Activated T-helper 2 cell treated with anti-CD3 and anti-CD28 coated beads, Interferon-gamma antibody, Interleukin-2, Interleukin-4, amounts not matched to agents 10 μg/mL and 5 μg/mL and 100 μg/mL, durations not matched to agents 14 hours and 24 hours and 36 hours (primary cell): ENCODE measurements at regions of chr13 and their contacts with region 1.

Region 1: DNA sequence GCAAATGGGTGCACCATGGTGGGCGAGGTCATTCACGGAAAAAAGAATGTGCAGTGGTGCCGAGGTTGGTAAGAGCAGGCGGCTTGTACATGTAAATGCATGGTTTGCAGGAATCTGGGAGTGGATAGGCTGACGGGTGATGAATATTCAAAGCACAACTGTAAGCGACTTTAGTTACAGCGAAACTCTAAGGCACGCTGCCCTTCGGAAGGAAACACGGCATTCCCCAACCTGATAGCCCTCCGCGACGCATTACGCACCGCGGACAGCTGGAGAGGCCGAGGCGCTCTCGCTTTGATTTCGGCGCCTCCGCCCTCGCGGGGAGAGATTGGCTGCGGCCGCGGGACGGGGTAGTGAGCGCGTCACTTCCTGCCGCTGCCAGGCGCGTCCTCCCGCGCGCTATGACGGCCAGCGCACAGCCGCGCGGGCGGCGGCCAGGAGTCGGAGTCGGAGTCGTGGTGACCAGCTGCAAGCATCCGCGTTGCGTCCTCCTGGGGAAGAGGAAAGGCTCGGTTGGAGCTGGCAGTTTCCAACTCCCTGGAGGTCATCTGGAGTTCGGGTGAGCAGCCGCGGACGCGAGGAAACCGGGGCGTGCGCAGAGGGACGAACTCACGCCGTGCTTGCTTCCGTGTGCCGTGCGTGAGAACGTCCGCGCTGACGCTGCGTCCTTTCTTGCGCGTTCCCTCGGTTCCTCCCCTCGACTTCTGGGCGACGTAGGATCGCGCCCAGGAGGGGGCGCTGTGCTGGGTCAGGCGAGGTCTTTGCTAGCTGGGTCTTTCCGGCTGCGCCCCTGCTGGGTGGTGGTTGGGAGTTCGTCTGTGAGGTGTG is at the start of gene NUDT15:
- DNase-seq: peak; percentile 96
- H3K4me3 Mint-ChIP-seq: peak within 1 kb of the TSS; percentile 98
- H3K27ac Mint-ChIP-seq: peak within 1 kb of the TSS; percentile 99
- H3K4me1 Mint-ChIP-seq: peaks cover 40% of the 10 kb centered on the region
- H3K27me3 Mint-ChIP-seq: no peaks in the 10 kb centered on the region
- total RNA-seq, gene NUDT15: 12.2 and 15.9 TPM in 2 replicates

Region 2: DNA sequence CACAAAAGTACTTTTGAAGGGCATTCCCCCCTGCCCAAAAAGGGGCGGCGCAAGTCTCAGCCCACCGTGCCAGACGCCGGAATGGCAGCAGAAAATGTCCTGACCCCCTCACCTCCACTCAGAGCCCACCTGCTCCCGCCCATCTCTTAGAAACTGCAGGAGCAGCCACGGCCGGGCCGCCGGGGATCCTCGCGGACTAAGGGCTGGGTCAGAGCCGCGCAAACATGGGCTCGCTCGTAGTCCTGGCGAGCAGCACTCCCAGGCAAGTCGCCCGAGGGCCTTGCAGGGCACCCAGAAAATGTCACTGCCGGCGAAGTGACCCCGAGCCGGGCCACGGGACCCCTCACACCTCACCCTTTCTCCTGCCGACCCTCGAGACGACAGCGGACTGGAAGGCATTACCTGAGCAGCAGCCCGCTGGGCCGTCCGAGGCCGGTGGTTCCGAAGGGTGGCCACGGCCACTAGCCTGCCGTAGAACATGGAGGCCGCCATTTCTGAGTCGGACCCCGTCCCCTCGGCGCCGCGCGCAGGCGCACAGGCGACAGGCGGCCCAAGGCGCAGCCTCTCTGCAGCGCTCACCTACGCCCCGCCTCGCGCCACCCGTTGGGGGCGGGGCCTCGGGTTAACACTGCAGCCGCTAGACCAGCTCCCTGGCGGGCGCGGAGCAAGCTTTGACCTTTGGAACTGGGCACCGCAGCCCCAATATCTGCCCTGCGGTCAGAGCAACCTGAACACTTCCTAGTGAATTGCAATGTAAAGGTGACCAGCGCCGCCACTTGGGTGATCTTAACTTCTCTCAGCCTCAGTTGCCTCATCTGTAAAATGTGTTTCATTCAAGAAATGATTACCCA is 36.6 kb before region 1 on chr13 and contains the start of gene SUCLA2:
- intact Hi-C with region 1: loop called (anchors 1 kb)
- DNase-seq: peak; percentile 90
- H3K4me3 Mint-ChIP-seq: peak within 1 kb of the TSS; percentile 96
- H3K27ac Mint-ChIP-seq: peak within 1 kb of the TSS; percentile 89
- H3K4me1 Mint-ChIP-seq: peaks cover 23% of the 10 kb centered on the region
- H3K27me3 Mint-ChIP-seq: no peaks in the 10 kb centered on the region
- total RNA-seq, gene SUCLA2: 42.0 and 43.7 TPM in 2 replicates

Region 3: DNA sequence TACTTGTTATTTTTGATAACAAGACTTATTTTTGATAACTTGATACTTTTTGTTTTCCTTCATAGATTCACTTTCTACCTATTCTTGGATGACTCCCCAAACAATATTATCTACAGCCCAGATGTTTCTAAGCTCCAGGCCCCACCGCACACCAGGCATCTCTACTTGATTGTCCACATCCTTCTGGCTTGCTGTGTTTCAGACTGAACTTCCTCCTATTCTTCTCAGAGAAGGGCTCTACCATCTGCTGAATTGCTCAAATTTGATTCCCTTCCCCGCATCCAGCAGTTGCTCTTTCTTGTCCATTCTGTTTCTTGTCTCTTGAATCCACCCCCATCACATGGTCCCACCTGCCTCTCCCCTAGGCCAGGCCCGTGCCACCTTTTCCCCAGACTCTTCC is 13.0 kb after region 1 on chr13:
- intact Hi-C with region 1: no loop called
- DNase-seq: no peak
- H3K4me3 Mint-ChIP-seq: no peak overlapping the region
- H3K27ac Mint-ChIP-seq: no peak overlapping the region
- H3K4me1 Mint-ChIP-seq: no peaks in the 10 kb centered on the region
- H3K27me3 Mint-ChIP-seq: no peaks in the 10 kb centered on the region

Region 4: GRCh38 chr13:48094781-48095502 is 57.4 kb after region 1 on chr13 and contains the start of gene MED4:
- intact Hi-C with region 1: loop called (anchors 1 kb)
- DNase-seq: peak; percentile 96
- H3K4me3 Mint-ChIP-seq: peak within 1 kb of the TSS; percentile 99
- H3K27ac Mint-ChIP-seq: peak within 1 kb of the TSS; percentile 95
- H3K4me1 Mint-ChIP-seq: peaks cover 26% of the 10 kb centered on the region
- H3K27me3 Mint-ChIP-seq: peaks cover 8% of the 10 kb centered on the region
- total RNA-seq, gene MED4: 56.1 and 56.3 TPM in 2 replicates

Region 5: GRCh38 chr13:48303359-48304142 is 266.0 kb after region 1 on chr13 and contains the start of gene RB1:
- intact Hi-C with region 1: loop called (anchors 1 kb)
- DNase-seq: peak; percentile 89
- H3K4me3 Mint-ChIP-seq: peak within 1 kb of the TSS; percentile 99
- H3K27ac Mint-ChIP-seq: peak within 1 kb of the TSS; percentile 97
- H3K4me1 Mint-ChIP-seq: peaks cover 27% of the 10 kb centered on the region
- H3K27me3 Mint-ChIP-seq: no peaks in the 10 kb centered on the region
- total RNA-seq, gene RB1: 27.1 and 28.0 TPM in 2 replicates